Posterior vena cava (tissue), 2 donors: ENCODE measurements at regions of chr4 and their contacts with region 1.

Region 1: DNA sequence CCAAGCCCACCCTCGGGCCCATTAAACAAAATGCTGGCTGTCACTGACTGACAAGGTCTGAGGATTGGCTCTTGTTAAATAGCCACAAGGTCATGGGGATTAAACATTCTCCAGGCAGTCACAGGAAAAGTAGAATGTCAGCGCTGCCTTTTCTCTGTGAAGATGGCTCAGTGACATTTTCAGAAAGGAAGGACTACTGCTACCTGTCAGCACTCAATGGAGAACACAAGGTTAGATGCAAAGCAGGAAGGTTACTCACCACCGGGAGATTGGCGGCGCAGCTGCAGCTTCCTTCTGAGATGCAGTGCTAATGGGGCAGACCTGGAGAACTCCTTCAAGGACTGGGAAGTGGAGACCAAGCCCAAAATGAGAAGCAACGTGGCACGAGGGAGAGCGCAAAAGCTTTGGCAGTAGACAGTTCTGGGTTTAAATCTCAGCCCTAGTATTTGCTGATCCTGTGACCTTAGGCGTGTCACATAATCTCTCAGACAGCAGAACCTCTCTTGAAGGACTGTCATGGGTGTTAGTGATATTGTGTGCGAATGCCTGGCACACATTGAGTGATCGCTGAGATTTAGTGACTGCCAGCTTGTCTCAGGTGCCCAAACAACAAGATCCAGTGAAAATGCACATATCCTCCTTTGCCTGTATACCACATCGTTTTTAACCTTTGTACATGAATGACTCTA is 213.1 kb upstream of the BOD1L1 start:
- DNase-seq: no peak

Region 2: GRCh38 chr4:13208558-13209193 is 632.0 kb before region 1 on chr4:
- intact Hi-C with region 1: no loop called
- DNase-seq: no peak

Region 3: GRCh38 chr4:13866881-13867280 is 26.2 kb after region 1 on chr4:
- intact Hi-C with region 1: loop called in 1 of 2 experiments (anchors 1 kb)
- DNase-seq: no peak